Natural killer cell (primary cell): ENCODE measurements at regions of chr17 and their contacts with region 1.

Region 1: GRCh38 chr17:81871387-81872230 is 472 bp upstream of the ARHGDIA start:
- DNase-seq: peak; percentile 96 to 97
- ATAC-seq: peak in 2 of 3 donors; percentile 25 to 48
- H3K4me3 ChIP-seq: peak overlapping the region; percentile 87
- H3K4me3 Mint-ChIP-seq: peak overlapping the region; percentile 88
- H3K27ac ChIP-seq: peak overlapping the region; percentile 96
- H3K27ac Mint-ChIP-seq: peak overlapping the region; percentile 85 to 90
- H3K4me1 ChIP-seq: peaks cover 48% of the 10 kb centered on the region
- H3K4me1 Mint-ChIP-seq: peaks cover 14 to 40% of the 10 kb centered on the region in 2 donors
- H3K27me3 ChIP-seq: no peaks in the 10 kb centered on the region
- H3K27me3 Mint-ChIP-seq: no peaks in the 10 kb centered on the region
- CTCF ChIP-seq: peak; percentile 38

Region 2: DNA sequence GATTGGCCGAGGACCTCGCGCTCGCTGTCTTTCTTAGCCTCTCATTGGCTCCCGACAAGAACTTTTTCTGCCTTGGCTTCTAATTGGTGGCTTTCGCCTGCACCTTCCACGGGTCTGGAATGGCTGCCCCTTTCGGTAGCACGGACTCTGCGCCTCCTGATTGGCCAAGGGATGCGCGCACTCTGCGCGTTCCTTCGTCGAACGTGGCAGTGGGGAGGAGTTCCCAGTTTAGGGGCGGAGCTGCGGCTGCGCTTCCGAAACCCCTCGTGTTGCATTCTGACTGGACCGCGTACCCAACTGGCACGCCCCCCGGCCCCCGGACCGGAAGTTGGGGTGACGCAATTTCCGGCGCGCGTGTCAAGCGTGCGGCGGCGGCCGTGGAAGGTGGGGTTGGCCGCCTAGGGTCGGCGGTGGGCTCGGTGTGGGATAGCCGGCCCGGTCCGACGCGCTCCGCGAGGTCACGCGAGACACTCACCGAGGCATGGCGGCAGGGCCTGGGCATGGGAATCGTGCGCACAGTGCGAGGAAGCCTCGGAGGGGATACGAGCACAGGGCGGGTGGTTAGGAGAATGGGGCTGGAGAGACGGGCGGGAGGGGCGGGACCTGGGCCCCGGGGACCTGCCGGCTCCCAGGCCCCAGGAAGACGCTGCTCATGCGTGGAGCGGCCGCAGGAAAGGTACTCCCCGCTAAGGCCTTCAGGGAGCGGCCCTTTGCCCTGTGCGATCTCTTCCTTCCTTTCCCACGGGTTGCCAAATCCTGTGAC is 10.7 kb before region 1 on chr17:
- intact Hi-C with region 1: loop called (anchors 1 kb)
- DNase-seq: peak; percentile 100
- ATAC-seq: peak; percentile 83 to 95 (median 84)
- H3K4me3 ChIP-seq: peak overlapping the region; percentile 62
- H3K4me3 Mint-ChIP-seq: peak overlapping the region; percentile 93
- H3K27ac ChIP-seq: peak overlapping the region; percentile 98
- H3K27ac Mint-ChIP-seq: peak overlapping the region; percentile 96 to 99
- H3K4me1 ChIP-seq: peaks cover 32% of the 10 kb centered on the region
- H3K4me1 Mint-ChIP-seq: peaks cover 21 to 36% of the 10 kb centered on the region in 2 donors
- H3K27me3 ChIP-seq: no peaks in the 10 kb centered on the region
- H3K27me3 Mint-ChIP-seq: peaks cover 0 to 3% of the 10 kb centered on the region in 2 donors
- CTCF ChIP-seq: no peak

Region 3: GRCh38 chr17:82098072-82098821 is 226.6 kb after region 1 on chr17 and contains the start of gene FASN:
- intact Hi-C with region 1: loop called (anchors 10 kb)
- DNase-seq: peak; percentile 84 to 96
- ATAC-seq: peak; percentile 74 to 89 (median 80)
- H3K4me3 ChIP-seq: peak within 1 kb of the TSS; percentile 42
- H3K4me3 Mint-ChIP-seq: peak within 1 kb of the TSS; percentile 83
- H3K27ac ChIP-seq: peak within 1 kb of the TSS; percentile 86
- H3K27ac Mint-ChIP-seq: peak within 1 kb of the TSS in 1 of 2 donors; percentile 81
- H3K4me1 ChIP-seq: peaks cover 23% of the 10 kb centered on the region
- H3K4me1 Mint-ChIP-seq: peaks cover 0 to 4% of the 10 kb centered on the region in 2 donors
- H3K27me3 ChIP-seq: no peaks in the 10 kb centered on the region
- H3K27me3 Mint-ChIP-seq: no peaks in the 10 kb centered on the region
- CTCF ChIP-seq: peak; percentile 23
- total RNA-seq, gene FASN: 53.8 to 56.2 (median 54.0) TPM